PC-3 (cell line): ENCODE measurements at regions of chr7 and their contacts with region 1.

Region 1: GRCh38 chr7:80826520-80827238 is 92.2 kb downstream of the SEMA3C start:
- DNase-seq: peak; percentile 87
- ATAC-seq: peak; percentile 82
- H3K4me3 ChIP-seq: 0 out of 2 replicates have a peak overlapping the region, but pooled peaks have one; percentile 14
- H3K27ac ChIP-seq: peak overlapping the region; percentile 80
- H3K4me1 ChIP-seq: peaks cover 51% of the 10 kb centered on the region
- H3K27me3 ChIP-seq: no peaks in the 10 kb centered on the region
- CTCF ChIP-seq: no peak

Region 2: DNA sequence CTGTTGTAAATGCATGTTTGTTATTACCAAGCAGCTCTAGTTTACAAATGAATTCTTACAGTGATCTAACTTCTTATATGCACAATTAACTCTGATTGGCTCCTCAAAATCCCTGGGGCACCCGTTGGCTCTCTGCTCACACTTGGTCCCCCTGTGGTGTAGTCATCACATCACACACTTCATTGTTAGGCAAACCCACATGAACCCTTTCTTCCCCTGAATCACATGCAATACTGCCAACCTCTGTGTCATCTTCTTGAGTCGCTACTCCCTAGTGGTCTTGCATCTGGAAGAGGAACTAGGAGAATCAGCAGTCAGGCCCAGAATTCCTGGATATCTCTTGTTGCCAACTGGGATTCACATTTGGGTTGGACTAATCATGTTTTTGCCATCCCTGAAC is 115.1 kb before region 1 on chr7:
- CTCF ChIA-PET with region 1: no interaction called
- POLR2A ChIA-PET with region 1: no interaction called
- intact Hi-C with region 1: no loop called
- DNase-seq: peak; percentile 49
- ATAC-seq: peak; percentile 24; the same call in 1 of the 2 replicates
- H3K4me3 ChIP-seq: no peak overlapping the region
- H3K27ac ChIP-seq: no peak overlapping the region
- H3K4me1 ChIP-seq: peaks cover 6% of the 10 kb centered on the region; the same call in 1 of the 2 replicates
- H3K27me3 ChIP-seq: no peaks in the 10 kb centered on the region
- CTCF ChIP-seq: no peak

Region 3: DNA sequence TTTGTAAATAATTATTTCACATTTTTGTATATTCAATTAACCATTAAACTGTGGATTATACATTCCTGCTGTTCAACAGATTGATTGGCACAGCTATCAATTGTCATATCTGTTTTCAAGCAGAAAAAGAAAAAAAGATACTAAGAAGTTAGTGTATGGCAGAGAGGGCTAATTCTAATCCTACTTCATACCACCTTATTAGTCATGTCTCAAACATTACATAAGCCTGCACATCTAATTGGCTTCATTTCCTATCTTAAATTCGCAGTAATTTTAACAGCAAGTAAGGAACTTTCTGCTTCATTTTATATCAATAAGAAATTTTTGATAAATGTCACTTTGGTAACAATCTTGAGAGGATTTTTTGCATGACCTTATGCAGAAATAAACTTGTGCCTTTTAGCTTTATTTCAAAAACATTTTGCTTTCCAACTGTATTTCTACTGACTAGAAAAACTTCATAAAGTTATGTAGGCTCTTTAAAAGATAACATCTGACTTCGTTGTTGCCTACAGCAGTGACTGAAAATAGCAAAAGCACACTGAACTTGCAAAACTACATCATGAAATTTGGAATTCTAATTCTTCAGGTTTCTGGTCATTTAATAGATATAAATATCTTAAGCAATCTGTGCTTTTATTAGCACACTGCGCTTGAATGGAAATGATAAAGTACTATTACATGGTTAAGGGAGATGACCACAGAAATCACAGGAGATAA is 19.4 kb before region 1 on chr7:
- CTCF ChIA-PET with region 1: no interaction called
- POLR2A ChIA-PET with region 1: no interaction called
- intact Hi-C with region 1: no loop called
- DNase-seq: no peak
- ATAC-seq: no peak
- H3K4me3 ChIP-seq: no peak overlapping the region
- H3K27ac ChIP-seq: no peak overlapping the region
- H3K4me1 ChIP-seq: peaks cover 3% of the 10 kb centered on the region; the same call in 1 of the 2 replicates
- H3K27me3 ChIP-seq: no peaks in the 10 kb centered on the region
- CTCF ChIP-seq: no peak

Region 4: GRCh38 chr7:80883188-80884025 is 56.7 kb after region 1 on chr7:
- CTCF ChIA-PET with region 1: no interaction called
- POLR2A ChIA-PET with region 1: no interaction called
- intact Hi-C with region 1: loop called (anchors 2 kb)
- DNase-seq: peak; percentile 97
- ATAC-seq: peak; percentile 95
- H3K4me3 ChIP-seq: no peak overlapping the region
- H3K27ac ChIP-seq: peak overlapping the region; percentile 58
- H3K4me1 ChIP-seq: peaks cover 25% of the 10 kb centered on the region
- H3K27me3 ChIP-seq: no peaks in the 10 kb centered on the region
- CTCF ChIP-seq: no peak